ENCODE measurements at regions of chr10 and their contacts with region 1.

Region 1: DNA sequence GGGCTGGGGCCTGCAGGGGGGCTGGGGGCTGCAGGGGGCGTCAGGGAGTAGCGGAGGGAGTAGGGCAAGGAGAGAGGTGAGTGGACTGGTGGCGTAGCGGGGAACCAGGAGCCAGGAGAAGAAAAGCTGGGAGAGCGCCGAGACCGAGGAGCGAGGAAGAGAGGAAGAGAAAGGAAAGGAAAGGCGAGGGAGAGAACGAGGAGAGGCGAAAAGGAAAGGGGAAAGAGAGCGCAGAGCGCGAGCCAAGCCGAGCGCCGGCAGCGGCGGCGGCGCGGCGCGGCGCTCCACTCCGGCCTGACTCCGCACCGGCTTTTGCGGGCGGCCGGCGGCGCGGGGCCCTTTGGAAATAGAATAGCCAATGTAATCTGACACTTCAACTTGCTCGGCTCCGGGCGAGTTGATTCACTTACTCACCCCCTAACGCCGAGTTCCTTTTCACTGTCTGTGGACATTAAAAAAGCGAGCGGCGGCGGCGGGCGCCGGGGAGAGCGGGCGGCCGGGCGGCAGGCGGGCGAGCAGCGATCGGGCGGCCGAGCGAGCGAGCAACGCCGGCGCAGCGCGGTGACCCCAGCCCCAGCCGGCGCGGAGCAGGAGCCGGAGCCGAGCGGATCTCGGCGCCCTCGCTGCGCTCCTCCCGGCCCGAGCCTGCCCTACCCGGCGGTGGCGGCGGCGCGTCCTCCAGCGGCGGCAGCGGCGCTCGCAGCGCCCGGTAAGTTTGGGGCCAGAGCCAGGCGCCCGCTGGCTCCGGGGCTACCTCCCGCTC is at the start of gene ZMIZ1:
- DNase-seq: peak; percentile 95
- ATAC-seq: peak; percentile 40
- total RNA-seq, gene ZMIZ1: 48.8 TPM

Region 2: GRCh38 chr10:78211561-78212051 is 857.1 kb before region 1 on chr10:
- intact Hi-C with region 1: loop called (anchors 5 kb)
- DNase-seq: no peak
- ATAC-seq: peak; percentile 2

Region 3: DNA sequence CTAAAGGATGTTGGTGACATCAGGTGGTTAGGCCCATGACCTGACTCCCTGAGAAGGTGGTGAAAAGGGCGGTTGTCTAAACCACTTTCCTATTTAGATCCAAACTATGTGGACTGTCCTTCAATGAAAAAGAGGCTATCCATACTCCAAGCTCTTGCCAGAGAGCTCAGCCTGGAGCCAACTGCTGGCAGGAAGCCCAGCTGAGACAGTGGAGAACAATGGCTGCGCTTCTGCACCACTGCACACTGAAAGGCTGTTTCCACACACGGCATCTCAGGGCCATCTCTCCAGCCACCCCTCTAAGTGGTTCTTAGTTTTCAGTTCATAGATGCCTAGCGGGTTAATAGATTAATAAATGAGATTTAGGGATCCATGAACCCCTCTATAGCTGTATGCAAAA is 488.7 kb before region 1 on chr10:
- intact Hi-C with region 1: no loop called
- DNase-seq: peak; percentile 84
- ATAC-seq: peak; percentile 77

Region 4: DNA sequence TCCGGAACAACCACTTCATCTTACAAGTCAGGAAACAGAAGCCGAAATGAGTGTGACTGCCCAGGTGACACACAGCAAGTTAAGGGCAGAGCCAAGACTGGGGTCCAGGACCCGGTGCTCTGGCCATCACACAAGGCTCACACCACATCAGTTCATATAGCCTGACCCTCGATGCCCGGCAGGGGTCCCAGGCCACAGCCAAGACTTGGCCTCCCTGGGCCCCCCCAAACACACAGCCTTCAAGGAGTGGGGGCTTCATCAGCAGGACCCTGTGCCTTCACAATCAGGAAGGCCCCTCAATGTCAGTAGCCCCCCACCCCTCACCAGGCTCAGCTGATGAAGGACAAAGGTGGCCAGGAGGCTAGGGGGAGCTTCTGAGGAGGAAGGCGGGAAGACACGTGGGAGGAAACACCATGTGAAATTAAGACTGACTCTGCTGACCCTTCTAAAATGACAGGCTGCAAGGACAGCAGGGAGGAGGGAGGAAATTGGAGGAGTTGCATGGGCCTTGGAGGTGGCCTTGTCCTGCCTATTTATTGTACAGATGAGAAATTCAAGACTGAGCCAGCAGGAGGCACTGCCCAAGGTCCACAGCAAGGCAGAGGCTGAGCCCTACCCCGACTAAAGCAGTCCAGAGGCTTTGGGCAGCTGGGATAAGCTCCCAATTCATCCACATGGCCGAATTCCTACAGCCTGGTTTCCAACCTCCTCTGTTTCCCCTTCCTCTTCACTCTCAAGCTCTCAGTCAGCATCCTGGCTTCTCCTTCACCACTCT is 216.1 kb before region 1 on chr10:
- intact Hi-C with region 1: loop called (anchors 5 kb)
- DNase-seq: no peak
- ATAC-seq: no peak

Region 5: GRCh38 chr10:79022565-79023230 is 46.0 kb before region 1 on chr10:
- intact Hi-C with region 1: loop called (anchors 5 kb)
- DNase-seq: peak; percentile 79
- ATAC-seq: peak; percentile 51

Region 6: GRCh38 chr10:79127151-79127961 is 58.6 kb after region 1 on chr10:
- intact Hi-C with region 1: no loop called
- DNase-seq: peak; percentile 87
- ATAC-seq: peak; percentile 74

Region 7: GRCh38 chr10:79137826-79138225 is 69.1 kb after region 1 on chr10:
- intact Hi-C with region 1: loop called (anchors 5 kb)
- DNase-seq: no peak
- ATAC-seq: peak; percentile 23